Naive thymus-derived CD4-positive, alpha-beta T cell (primary cell): ENCODE measurements at regions of chr16 and their contacts with region 1.

Region 1: DNA sequence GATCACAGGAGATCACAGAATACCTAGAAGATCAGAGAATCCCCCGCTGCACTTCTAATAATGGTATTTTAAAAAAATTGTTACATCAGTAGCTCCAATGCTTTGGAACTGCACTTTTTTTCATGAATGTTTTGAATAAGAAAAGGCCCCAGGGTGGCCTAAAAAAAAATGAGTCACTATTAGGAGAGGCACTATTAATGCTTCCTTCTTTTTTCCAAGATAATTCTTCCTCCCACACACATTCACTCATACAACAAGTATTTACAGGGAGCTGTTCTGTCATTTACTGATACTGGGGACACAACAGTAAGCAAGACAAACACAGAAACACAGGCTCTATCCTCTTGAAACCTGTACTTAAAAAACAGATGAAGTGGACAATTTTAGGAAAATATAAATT is 675 bp upstream of the PDZD9 start:
- DNase-seq: no peak
- ATAC-seq: no peak
- H3K4me3 ChIP-seq: no peak overlapping the region
- H3K4me3 Mint-ChIP-seq: peak overlapping the region in 2 of 10 donors; percentile 26 to 59
- H3K27ac ChIP-seq: no peak overlapping the region
- H3K27ac Mint-ChIP-seq: peak overlapping the region in 2 of 9 donors; percentile 13 to 65
- H3K4me1 ChIP-seq: peaks cover 0 to 9% of the 10 kb centered on the region in 2 donors
- H3K4me1 Mint-ChIP-seq: peaks cover 6 to 21% (median 15%) of the 10 kb centered on the region in 7 donors
- H3K27me3 ChIP-seq: no peaks in the 10 kb centered on the region
- H3K27me3 Mint-ChIP-seq: peaks cover 0 to 7% (median 0%) of the 10 kb centered on the region in 5 donors

Region 2: GRCh38 chr16:22013486-22013885 is 11.9 kb after region 1 on chr16:
- CTCF ChIA-PET with region 1: interaction called, 15 read pairs
- POLR2A ChIA-PET with region 1: no interaction called
- intact Hi-C with region 1: no loop called
- DNase-seq: no peak
- ATAC-seq: no peak
- H3K4me3 ChIP-seq: no peak overlapping the region
- H3K4me3 Mint-ChIP-seq: no peak overlapping the region
- H3K27ac ChIP-seq: no peak overlapping the region
- H3K27ac Mint-ChIP-seq: no peak overlapping the region
- H3K4me1 ChIP-seq: peaks cover 4 to 15% of the 10 kb centered on the region in 2 donors
- H3K4me1 Mint-ChIP-seq: peaks cover 24 to 92% (median 79%) of the 10 kb centered on the region in 7 donors
- H3K27me3 ChIP-seq: no peaks in the 10 kb centered on the region
- H3K27me3 Mint-ChIP-seq: no peaks in the 10 kb centered on the region

Region 3: DNA sequence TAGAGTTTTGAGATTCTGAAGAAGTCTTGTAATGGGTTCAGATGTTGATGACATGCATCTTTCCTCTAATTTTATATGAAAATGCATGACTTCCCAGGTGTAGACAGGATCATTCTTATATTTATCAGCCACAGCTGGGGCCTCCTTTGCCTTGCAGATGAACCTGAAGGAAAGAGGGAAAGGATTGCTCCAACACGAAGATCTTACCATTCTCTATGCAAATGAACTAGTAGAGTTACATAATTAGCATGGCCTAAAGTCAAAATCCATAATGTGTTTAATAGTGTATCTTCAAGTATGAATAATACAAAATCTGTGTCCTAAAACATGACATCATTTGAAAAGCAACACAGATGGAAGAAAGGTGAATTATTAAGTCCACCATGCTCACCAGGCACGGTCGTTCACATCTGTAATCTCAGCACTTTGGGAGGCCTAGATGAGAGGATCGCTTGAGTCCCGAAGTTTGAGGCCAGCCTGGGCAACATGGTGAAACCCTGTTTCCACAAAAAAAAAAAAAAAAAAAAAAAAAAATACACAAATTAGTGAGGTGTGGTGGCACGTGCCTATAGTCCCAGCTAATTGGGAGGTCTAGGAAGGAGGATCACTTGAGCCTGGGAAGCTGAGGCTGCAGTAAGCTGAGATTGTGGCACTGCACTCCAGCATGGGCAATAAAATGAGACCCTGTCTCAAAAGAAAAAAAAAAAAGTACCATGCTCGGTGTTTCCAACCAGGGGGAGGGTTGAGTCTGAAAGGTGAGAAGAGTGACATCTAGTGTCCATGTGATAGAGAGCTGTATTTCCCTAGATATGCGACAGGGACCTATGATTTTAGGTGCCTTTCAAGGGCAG is 97.0 kb after region 1 on chr16:
- CTCF ChIA-PET with region 1: interaction called, 4 read pairs
- POLR2A ChIA-PET with region 1: no interaction called
- intact Hi-C with region 1: loop called (anchors 1 kb)
- DNase-seq: peak in 7 of 9 donors; percentile 15 to 55 (median 42)
- ATAC-seq: peak; percentile 76
- H3K4me3 ChIP-seq: no peak overlapping the region
- H3K4me3 Mint-ChIP-seq: peak overlapping the region in 4 of 10 donors; percentile 34 to 74 (median 53)
- H3K27ac ChIP-seq: no peak overlapping the region
- H3K27ac Mint-ChIP-seq: peak overlapping the region in 1 of 9 donors; percentile 19
- H3K4me1 ChIP-seq: no peaks in the 10 kb centered on the region
- H3K4me1 Mint-ChIP-seq: peaks cover 0 to 5% (median 0%) of the 10 kb centered on the region in 7 donors
- H3K27me3 ChIP-seq: no peaks in the 10 kb centered on the region
- H3K27me3 Mint-ChIP-seq: peaks cover 9 to 24% (median 17%) of the 10 kb centered on the region in 5 donors